ENCODE measurements at regions of chr19 and their contacts with region 1.

Region 1: GRCh38 chr19:10695401-10696398 is 5.5 kb upstream of the QTRT1 start:
- DNase-seq: peak; percentile 93
- H3K4me3 Mint-ChIP-seq: peak overlapping the region; percentile 53
- H3K27ac Mint-ChIP-seq: no peak overlapping the region
- H3K4me1 Mint-ChIP-seq: peaks cover 18% of the 10 kb centered on the region
- H3K27me3 Mint-ChIP-seq: peaks cover 19% of the 10 kb centered on the region

Region 2: GRCh38 chr19:10353793-10354391 is 341.8 kb before region 1 on chr19:
- CTCF ChIA-PET with region 1: no interaction called
- POLR2A ChIA-PET with region 1: no interaction called
- DNase-seq: peak; percentile 42
- H3K4me3 Mint-ChIP-seq: no peak overlapping the region
- H3K27ac Mint-ChIP-seq: no peak overlapping the region
- H3K4me1 Mint-ChIP-seq: no peaks in the 10 kb centered on the region
- H3K27me3 Mint-ChIP-seq: no peaks in the 10 kb centered on the region

Region 3: DNA sequence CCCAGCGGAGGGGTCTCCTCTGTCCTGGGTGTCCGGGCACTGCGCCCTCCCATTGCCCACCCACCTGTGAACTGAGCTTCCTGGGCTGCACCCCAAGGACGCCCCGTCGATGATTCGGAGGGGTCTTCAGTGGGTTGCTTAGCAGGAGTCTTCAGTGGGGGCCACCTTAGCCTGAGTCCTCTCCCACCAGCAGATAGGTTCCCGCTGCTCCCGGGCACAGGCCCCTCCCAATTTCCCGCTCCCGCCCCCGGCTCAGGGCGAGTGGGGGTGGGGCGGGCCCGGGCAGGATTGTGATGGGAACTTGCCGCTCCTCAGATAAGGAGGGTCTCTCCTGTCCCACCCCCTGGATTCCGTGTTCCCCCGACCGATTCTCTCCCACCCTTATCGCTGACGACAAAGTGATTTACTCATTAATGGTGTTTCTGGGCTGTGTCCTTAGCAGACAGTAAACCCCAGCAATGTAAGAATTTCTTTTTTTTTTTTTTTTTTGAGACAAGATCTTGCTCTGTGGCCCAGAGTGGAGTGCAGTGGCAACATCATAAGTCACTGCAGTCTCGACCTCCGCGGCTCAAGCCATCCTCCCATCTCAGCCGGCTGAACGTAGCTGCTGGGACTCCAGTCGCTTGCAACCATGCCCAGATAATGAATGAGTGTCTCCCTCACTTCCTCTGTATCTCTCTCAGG is 177.8 kb before region 1 on chr19:
- CTCF ChIA-PET with region 1: no interaction called
- POLR2A ChIA-PET with region 1: no interaction called
- DNase-seq: no peak
- H3K4me3 Mint-ChIP-seq: peak overlapping the region; percentile 34
- H3K27ac Mint-ChIP-seq: peak overlapping the region; percentile 45
- H3K4me1 Mint-ChIP-seq: peaks cover 32% of the 10 kb centered on the region
- H3K27me3 Mint-ChIP-seq: peaks cover 63% of the 10 kb centered on the region

Region 4: GRCh38 chr19:10644260-10645007 is 51.3 kb before region 1 on chr19:
- CTCF ChIA-PET with region 1: interaction called, 26 read pairs
- POLR2A ChIA-PET with region 1: no interaction called
- DNase-seq: peak; percentile 83
- H3K4me3 Mint-ChIP-seq: no peak overlapping the region
- H3K27ac Mint-ChIP-seq: no peak overlapping the region
- H3K4me1 Mint-ChIP-seq: peaks cover 3% of the 10 kb centered on the region
- H3K27me3 Mint-ChIP-seq: no peaks in the 10 kb centered on the region

Region 5: GRCh38 chr19:10670182-10670581 is 25.5 kb before region 1 on chr19:
- CTCF ChIA-PET with region 1: interaction called, 16 read pairs
- POLR2A ChIA-PET with region 1: interaction called, 4 read pairs
- DNase-seq: no peak
- H3K4me3 Mint-ChIP-seq: no peak overlapping the region
- H3K27ac Mint-ChIP-seq: no peak overlapping the region
- H3K4me1 Mint-ChIP-seq: peaks cover 29% of the 10 kb centered on the region
- H3K27me3 Mint-ChIP-seq: no peaks in the 10 kb centered on the region

Region 6: DNA sequence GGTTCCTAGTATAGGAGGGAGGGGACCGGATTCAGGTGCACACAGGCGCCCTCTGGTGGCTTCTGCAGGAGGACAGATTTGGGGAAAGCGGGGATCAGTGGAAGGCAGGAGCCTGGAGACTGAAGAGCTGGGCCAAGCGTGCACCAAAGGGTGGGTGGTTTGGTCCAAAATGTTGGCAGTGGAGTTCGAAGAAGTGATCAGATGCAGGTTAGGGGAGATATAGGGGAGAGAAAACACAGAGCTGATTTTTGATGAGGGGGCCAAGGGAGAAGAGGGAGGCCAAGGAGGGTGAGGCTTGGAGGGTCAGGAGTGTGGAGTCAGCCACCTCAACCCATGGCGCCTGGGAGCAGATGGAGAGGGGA is 168.8 kb after region 1 on chr19:
- CTCF ChIA-PET with region 1: interaction called, 33 read pairs
- POLR2A ChIA-PET with region 1: no interaction called
- DNase-seq: peak; percentile 85
- H3K4me3 Mint-ChIP-seq: no peak overlapping the region
- H3K27ac Mint-ChIP-seq: no peak overlapping the region
- H3K4me1 Mint-ChIP-seq: peaks cover 30% of the 10 kb centered on the region
- H3K27me3 Mint-ChIP-seq: no peaks in the 10 kb centered on the region

Measured in activated CD4-positive, alpha-beta memory T cell treated with anti-CD3 and anti-CD28 coated beads, Interleukin-2, amount 10 ng/mL, durations not matched to agents 7 days and 5 days (primary cell).